ENCODE measurements at regions of chr10 and their contacts with region 1.

Region 1: DNA sequence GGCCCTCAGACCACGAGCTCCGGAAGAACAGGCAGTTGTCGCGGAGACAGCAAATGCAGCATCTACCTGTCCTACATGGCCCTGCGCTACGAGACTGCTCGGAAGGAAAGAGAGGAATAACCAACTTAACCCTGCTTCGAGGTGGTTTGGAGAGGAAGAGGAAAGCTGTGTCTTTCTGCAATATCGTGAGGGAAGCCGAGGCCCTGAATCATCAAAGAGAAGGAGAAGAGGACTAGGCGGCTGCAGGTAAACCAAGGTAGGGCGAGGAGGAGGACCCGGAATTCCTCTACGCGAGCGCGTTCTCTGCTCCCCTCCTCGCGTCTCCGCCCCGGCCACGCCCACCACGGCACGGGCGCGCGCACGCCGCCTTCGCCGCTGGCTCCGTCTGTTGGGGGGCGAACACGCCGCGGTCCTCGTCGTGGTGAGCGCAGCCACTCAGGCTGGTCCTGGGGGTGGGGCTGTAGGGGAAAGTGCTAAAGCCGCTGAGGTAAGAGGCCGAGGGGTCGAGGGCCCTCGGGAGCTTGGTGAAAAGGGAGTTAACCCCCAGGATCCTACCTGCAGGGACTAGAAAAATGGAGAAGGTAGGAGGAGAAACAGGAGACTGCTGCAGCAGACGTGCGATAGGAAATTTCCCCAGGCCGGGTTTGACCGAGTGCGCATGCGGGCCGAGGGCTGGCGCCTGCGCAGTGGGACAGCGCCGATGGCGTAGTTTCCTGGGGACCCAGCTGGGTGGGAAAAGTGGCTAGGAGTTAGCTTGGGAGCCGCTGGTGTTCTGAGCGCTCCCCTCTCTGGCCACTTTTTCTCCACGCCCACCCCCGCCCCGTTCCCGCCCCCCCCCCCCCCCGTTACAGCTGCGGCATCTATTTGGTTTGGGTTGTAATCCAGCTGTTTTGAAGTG is at the starts of genes ANAPC16 and ASCC1:
- DNase-seq: peak; percentile 96 to 97
- H3K4me3 ChIP-seq: peak within 1 kb of the TSS; percentile 56 to 63
- H3K27ac ChIP-seq: peak within 1 kb of the TSS; percentile 97
- H3K4me1 ChIP-seq: peaks cover 34% of the 10 kb centered on the region
- H3K27me3 ChIP-seq: no peaks in the 10 kb centered on the region
- CTCF ChIP-seq: peak in 1 of 3 experiments; percentile 13
- POLR2A ChIP-seq: peak; percentile 58 to 84
- total RNA-seq, gene ANAPC16: 76.6 TPM
- total RNA-seq, gene ASCC1: 38.5 TPM

Region 2: DNA sequence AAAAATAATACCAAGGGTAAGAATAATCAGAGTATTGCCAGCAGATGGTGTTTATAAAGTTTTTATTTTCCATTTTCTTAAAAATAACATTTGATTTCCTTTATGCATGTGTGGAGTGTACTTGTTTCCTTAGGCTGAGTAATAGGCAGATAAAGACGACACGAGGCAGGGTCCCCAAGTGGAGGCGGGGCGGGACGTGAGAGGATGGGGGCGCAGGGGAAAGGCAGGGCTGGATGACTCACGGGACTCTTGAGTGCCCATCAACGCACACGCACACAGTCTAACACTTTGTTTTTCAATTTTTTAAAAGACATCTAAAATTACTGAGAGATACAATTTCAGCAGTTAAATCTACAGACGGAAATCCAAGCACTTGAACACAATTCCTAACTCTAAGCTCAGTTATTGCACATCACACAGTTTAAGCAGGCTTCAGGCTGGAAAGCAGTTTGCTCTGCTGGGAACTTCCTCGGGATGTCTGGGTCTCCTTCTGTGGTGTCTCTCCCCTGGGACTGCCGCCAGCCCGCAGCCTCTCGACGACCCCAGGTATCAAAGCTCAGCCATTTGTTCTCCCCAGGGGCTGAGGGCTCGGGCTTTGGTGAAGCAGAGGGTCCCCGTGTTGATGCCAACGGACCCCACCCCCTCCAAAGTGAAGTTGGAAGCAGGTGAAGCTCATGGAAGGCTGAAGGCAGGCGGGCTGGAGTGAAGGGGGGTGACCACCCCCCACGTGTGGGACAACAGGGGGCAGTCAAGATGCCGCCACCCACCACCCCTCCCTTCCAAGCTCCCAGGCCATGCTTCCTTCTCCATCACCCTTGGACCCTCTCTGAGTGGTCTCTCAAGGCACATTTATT is 156.7 kb before region 1 on chr10:
- intact Hi-C with region 1: loop called (anchors 10 kb)
- DNase-seq: no peak
- H3K4me3 ChIP-seq: no peak overlapping the region
- H3K27ac ChIP-seq: no peak overlapping the region
- H3K4me1 ChIP-seq: no peaks in the 10 kb centered on the region
- H3K27me3 ChIP-seq: no peaks in the 10 kb centered on the region
- CTCF ChIP-seq: no peak
- POLR2A ChIP-seq: no peak

Region 3: DNA sequence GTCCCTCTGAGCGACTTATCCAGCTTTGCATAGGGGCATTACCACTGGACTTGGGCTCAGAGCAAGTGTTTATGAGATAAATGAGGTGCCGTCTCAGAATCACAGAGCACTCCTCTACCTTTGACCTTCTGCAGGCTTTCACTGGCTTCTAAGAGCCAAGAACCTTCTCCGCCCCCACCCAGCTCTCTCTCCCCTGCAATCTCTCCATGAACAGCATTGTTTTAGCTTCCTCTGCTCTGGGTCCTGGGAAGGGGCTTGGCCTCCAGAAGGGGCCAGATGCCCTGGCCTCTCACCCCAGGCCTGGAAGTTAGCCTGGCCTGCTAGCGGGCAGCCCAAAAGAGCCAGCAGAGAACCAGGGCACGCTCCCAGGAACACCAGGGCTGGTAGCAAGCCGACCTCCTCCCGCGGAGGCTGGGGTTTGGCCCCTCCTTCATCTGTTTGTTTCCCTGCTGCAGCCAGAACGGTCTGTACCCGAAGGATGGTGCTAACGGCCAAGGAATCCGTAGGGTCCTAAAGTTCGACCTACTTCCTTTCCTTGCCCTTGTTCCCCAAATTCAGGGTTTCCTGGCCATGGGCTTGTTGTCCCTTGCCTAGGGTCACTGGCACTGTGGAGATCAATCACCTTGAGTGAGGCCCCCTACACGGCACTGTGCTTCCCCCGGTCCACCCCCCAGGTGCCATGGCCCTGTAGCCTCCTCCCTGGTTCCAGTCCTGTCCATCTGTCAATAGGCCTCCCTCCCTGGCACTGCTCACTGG is 39.1 kb after region 1 on chr10:
- intact Hi-C with region 1: loop called (anchors 5 kb)
- DNase-seq: peak in 1 of 2 donors; percentile 95
- H3K4me3 ChIP-seq: peak overlapping the region in 1 of 2 donors; percentile 14
- H3K27ac ChIP-seq: peak overlapping the region; percentile 98
- H3K4me1 ChIP-seq: peaks cover 94% of the 10 kb centered on the region
- H3K27me3 ChIP-seq: no peaks in the 10 kb centered on the region
- CTCF ChIP-seq: no peak
- POLR2A ChIP-seq: no peak

Region 4: DNA sequence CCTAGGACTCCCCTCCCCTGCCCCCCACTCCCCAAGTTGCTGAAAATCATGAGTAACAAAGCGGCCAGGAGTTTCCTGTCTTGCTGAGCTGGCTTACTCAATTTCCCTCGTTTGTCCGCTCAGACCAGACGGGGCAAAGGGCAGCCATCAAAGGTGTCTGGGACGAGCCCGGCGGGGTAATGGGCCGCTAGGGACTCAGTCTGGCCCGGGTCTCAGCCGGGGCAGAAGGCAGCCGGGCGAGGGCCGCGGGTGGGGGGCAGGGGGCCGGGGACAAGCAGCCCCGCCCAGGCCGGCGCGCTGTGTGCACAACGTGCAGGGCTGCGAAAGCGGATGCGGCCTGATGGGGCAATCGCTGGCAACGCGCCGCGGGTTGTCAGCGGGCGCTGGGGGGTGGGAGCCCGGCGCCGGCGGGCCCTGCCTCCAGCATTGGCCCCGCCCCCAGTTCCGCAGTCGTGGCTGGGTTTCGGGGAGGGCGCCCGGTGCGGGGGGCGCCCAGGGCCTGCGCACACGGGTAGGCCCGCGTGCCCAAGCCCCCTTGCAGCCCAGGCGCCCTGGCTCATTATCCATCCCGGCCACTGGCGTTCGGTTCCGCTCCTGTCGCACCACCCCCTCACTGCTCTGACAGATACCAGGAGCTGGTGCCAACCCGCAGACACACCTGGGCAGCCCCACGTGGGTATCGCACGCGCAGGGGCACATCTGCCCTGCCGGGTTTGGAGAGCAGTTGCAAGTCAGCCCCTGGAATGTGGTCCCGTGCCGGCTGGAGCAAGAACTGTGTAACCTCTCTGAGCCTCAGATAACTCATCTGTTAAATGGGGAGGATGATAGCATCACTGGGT is 103.7 kb after region 1 on chr10:
- intact Hi-C with region 1: loop called (anchors 5 kb)
- DNase-seq: peak in 1 of 2 donors; percentile 95
- H3K4me3 ChIP-seq: peak overlapping the region; percentile 44 to 56
- H3K27ac ChIP-seq: peak overlapping the region; percentile 95
- H3K4me1 ChIP-seq: peaks cover 96% of the 10 kb centered on the region
- H3K27me3 ChIP-seq: no peaks in the 10 kb centered on the region
- CTCF ChIP-seq: peak in 1 of 3 experiments; percentile 4
- POLR2A ChIP-seq: peak in 1 of 2 donors; percentile 37